Mammary epithelial cell (primary cell): ENCODE measurements at regions of chr2 and their contacts with region 1.

Region 1: GRCh38 chr2:50529600-50530218 is 502.2 kb downstream of the NRXN1 start:
- DNase-seq: peak; percentile 39
- H3K4me3 ChIP-seq: no peak overlapping the region
- H3K27ac ChIP-seq: no peak overlapping the region
- H3K4me1 ChIP-seq: peaks cover 10% of the 10 kb centered on the region
- H3K27me3 ChIP-seq: no peaks in the 10 kb centered on the region
- CTCF ChIP-seq: peak; percentile 73 to 76

Region 2: DNA sequence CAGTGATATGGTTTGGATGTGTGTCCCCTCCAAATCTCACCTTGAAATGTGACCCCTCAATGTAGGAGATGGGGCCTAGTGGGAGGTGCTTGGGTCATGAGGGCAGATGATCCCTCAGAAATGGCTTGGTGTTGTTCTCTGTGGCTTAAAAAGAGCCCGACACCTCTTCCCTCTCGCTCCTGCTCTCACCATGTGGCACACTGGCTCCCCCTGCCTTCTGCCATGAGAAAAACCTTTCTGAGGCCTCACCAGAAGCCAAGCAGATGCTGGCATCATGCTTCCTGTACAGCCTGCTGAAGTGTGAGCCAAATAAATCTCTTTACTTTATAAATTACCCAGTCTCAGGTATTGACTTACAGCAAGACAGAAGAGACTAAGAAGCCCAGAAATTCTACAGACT is 145.2 kb after region 1 on chr2:
- CTCF ChIA-PET with region 1: interaction called, 3 read pairs
- dilution Hi-C with region 1: no loop called
- in situ Hi-C with region 1: no loop called
- intact Hi-C with region 1: loop called (anchors 1 kb)
- DNase-seq: peak; percentile 2
- H3K4me3 ChIP-seq: no peak overlapping the region
- H3K27ac ChIP-seq: no peak overlapping the region
- H3K4me1 ChIP-seq: no peaks in the 10 kb centered on the region
- H3K27me3 ChIP-seq: no peaks in the 10 kb centered on the region
- CTCF ChIP-seq: peak in 1 of 2 donors; percentile 30

Region 3: GRCh38 chr2:50746526-50746925 is 216.8 kb after region 1 on chr2:
- CTCF ChIA-PET with region 1: no interaction called
- dilution Hi-C with region 1: no loop called
- in situ Hi-C with region 1: no loop called
- intact Hi-C with region 1: loop called (anchors 5 kb)
- DNase-seq: peak; percentile 12
- H3K4me3 ChIP-seq: no peak overlapping the region
- H3K27ac ChIP-seq: no peak overlapping the region
- H3K4me1 ChIP-seq: no peaks in the 10 kb centered on the region
- H3K27me3 ChIP-seq: no peaks in the 10 kb centered on the region
- CTCF ChIP-seq: peak; percentile 61 to 71

Region 4: DNA sequence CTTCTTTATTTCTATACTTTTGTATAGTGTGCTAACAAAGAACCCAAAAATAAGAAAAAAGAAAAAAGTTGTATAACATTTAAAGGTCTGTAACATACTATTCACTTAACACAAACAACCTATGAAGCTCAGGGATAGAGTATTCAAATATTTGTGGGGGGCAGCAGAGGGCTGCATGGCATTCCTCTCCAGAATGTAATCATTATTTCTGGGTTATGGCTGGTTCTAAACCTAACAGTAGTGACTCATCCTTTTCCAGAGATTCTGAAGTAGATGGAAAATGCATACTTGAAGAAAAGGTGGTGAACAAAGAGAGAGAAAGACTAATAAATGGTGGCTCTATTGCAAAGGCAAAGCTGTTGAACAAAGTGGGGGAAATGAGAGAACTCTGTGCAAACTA is 252.8 kb after region 1 on chr2:
- CTCF ChIA-PET with region 1: no interaction called
- dilution Hi-C with region 1: no loop called
- in situ Hi-C with region 1: no loop called
- intact Hi-C with region 1: no loop called
- DNase-seq: no peak
- H3K4me3 ChIP-seq: no peak overlapping the region
- H3K27ac ChIP-seq: no peak overlapping the region
- H3K4me1 ChIP-seq: no peaks in the 10 kb centered on the region
- H3K27me3 ChIP-seq: no peaks in the 10 kb centered on the region
- CTCF ChIP-seq: no peak

Region 5: DNA sequence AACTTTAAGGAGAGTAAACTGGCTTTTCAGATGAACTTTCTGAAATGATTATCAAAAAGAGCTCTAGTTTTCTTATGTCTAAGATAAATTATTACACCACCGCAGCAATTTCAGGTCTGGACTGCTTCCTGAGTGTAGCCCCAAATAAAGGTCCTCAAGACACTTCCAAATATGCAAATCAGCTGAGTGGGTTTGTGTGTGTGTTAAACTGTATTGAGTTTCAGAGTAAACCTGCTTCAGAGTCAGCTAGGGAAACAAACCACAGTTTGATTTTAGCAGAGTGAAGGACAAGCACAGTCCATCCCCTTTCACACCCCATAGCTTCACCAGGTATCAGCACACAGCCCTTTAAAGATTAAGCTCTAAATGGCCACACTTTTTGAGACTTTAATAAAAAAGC is 333.5 kb after region 1 on chr2:
- CTCF ChIA-PET with region 1: no interaction called
- dilution Hi-C with region 1: no loop called
- in situ Hi-C with region 1: no loop called
- intact Hi-C with region 1: no loop called
- DNase-seq: no peak
- H3K4me3 ChIP-seq: no peak overlapping the region
- H3K27ac ChIP-seq: no peak overlapping the region
- H3K4me1 ChIP-seq: no peaks in the 10 kb centered on the region
- H3K27me3 ChIP-seq: no peaks in the 10 kb centered on the region
- CTCF ChIP-seq: no peak

Region 6: DNA sequence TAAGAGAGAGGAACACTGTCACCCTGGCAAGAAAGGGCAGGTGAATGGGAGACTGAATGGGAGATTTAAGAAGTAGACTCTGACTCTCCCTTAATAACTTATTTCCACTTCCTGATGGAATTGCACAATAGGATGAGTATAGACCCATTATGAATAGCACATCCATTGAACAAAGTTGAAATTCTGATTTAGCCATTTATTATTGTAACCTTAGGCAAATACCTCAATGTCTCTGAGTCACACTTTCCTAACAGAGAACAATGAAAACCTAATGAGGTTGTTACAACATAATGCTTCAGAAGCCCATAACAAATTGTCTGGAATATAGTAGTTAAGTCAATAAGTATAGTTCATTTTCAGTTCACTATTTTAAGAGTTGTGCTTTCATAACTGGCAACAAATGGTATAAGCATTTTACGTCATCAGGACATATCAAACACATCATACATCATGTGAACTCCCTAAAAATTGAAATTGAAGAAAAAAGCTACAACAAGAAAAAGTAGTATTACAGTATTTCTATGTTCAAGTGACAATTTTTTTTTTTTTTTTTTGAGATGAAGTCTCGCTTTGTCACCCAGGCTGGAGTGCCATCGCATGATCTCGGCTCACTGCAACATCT is 423.4 kb after region 1 on chr2:
- CTCF ChIA-PET with region 1: no interaction called
- dilution Hi-C with region 1: no loop called
- in situ Hi-C with region 1: no loop called
- intact Hi-C with region 1: loop called (anchors 5 kb)
- DNase-seq: peak; percentile 96
- H3K4me3 ChIP-seq: no peak overlapping the region
- H3K27ac ChIP-seq: peak overlapping the region; percentile 98
- H3K4me1 ChIP-seq: peaks cover 30% of the 10 kb centered on the region
- H3K27me3 ChIP-seq: no peaks in the 10 kb centered on the region
- CTCF ChIP-seq: no peak